CD8-positive, alpha-beta memory T cell (primary cell): ENCODE measurements at regions of chr4 and their contacts with region 1.

Region 1: DNA sequence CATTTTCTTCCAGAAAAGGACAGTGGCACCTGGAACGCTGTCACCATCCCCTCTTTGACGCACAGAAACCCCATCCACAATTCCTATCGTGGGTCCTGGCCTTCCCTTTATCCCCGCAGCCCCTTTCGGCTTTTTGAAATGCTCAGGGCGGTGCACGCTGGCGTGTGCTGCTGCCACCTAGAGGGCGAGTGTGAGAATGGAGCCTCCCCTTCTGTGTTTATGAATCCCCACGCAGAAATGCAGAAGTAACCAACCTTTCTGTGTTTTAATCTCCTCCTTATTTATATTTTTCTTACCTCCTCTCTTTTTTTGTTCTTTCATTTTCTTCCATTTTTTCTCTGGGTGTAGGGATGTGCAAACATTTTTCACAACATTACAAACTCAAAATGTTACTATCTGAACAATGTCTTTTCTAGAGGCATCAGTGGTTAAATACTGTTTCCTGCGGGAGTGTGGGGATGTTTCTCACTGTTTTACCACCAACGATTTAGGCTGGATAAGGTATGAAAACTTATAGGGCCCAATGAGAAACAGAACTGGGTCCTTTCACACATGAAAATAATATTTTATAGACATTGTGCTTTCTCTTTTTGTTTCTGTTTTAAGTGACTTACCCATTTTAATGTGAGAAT is 50.0 kb downstream of the TMA16 start:
- DNase-seq: peak; percentile 31 to 64 (median 45)
- H3K4me3 ChIP-seq: peak overlapping the region; percentile 17
- H3K4me3 Mint-ChIP-seq: no peak overlapping the region
- H3K27ac ChIP-seq: no peak overlapping the region
- H3K27ac Mint-ChIP-seq: peak overlapping the region in 1 of 8 donors; percentile 30
- H3K4me1 ChIP-seq: no peaks in the 10 kb centered on the region
- H3K4me1 Mint-ChIP-seq: peaks cover 6 to 10% (median 7%) of the 10 kb centered on the region in 3 donors
- H3K27me3 ChIP-seq: no peaks in the 10 kb centered on the region
- H3K27me3 Mint-ChIP-seq: no peaks in the 10 kb centered on the region

Region 2: DNA sequence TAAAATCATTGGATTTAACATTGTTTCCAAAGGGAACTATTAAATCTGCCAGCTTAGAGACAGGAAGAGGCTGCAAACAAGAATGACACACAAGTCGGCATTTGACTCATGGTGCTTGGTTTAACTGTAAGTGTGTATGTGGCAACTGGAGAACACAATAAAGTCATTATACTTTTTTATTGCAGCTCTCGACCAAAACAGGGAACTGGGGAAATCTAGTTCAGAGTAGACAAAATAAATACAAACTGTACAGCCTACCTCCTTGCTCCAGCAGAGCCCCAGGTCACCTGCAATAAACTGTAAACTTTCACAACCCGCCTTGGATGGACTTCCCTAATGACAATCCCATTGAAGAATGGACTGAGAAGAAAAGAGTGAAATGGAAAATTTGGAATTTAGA is 176.9 kb before region 1 on chr4:
- CTCF ChIA-PET with region 1: no interaction called
- POLR2A ChIA-PET with region 1: no interaction called
- DNase-seq: no peak
- H3K4me3 ChIP-seq: no peak overlapping the region
- H3K4me3 Mint-ChIP-seq: no peak overlapping the region
- H3K27ac ChIP-seq: no peak overlapping the region
- H3K27ac Mint-ChIP-seq: no peak overlapping the region
- H3K4me1 ChIP-seq: no peaks in the 10 kb centered on the region
- H3K4me1 Mint-ChIP-seq: no peaks in the 10 kb centered on the region
- H3K27me3 ChIP-seq: peaks cover 3% of the 10 kb centered on the region
- H3K27me3 Mint-ChIP-seq: peaks cover 4 to 13% of the 10 kb centered on the region in 2 donors

Region 3: DNA sequence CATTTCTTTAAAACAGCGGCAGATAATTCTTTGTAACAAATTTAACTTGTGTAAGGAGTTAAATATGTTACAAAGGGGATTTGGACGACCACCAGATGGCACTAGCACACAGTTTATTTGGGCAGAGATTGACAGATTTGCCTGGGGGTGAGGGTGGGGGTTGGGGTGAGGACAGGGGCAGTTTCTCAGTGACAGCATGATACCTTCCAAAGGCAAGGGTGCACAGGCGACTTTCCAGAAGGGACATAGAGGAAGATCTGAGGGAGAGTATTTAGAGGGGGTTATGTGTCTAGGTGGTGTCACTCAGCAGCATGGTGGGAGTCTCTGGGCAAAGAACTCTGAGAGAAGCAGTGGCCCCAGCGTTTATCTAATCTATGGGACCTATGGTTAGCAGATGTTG is 59.6 kb before region 1 on chr4:
- CTCF ChIA-PET with region 1: interaction called, 65 read pairs
- POLR2A ChIA-PET with region 1: no interaction called
- DNase-seq: peak; percentile 26 to 63 (median 38)
- H3K4me3 ChIP-seq: no peak overlapping the region
- H3K4me3 Mint-ChIP-seq: no peak overlapping the region
- H3K27ac ChIP-seq: no peak overlapping the region
- H3K27ac Mint-ChIP-seq: no peak overlapping the region
- H3K4me1 ChIP-seq: no peaks in the 10 kb centered on the region
- H3K4me1 Mint-ChIP-seq: no peaks in the 10 kb centered on the region
- H3K27me3 ChIP-seq: no peaks in the 10 kb centered on the region
- H3K27me3 Mint-ChIP-seq: peaks cover 9 to 26% of the 10 kb centered on the region in 2 donors

Region 4: GRCh38 chr4:163494360-163495162 is 50.0 kb before region 1 on chr4 and contains the start of gene TMA16:
- CTCF ChIA-PET with region 1: interaction called, 14 read pairs
- POLR2A ChIA-PET with region 1: interaction called, 10 read pairs
- DNase-seq: peak; percentile 60 to 81 (median 78)
- H3K4me3 ChIP-seq: peak within 1 kb of the TSS; percentile 94
- H3K4me3 Mint-ChIP-seq: peak within 1 kb of the TSS; percentile 94 to 100 (median 98)
- H3K27ac ChIP-seq: peak within 1 kb of the TSS; percentile 82
- H3K27ac Mint-ChIP-seq: peak within 1 kb of the TSS; percentile 89 to 98 (median 98)
- H3K4me1 ChIP-seq: peaks cover 18% of the 10 kb centered on the region
- H3K4me1 Mint-ChIP-seq: peaks cover 34 to 43% (median 37%) of the 10 kb centered on the region in 3 donors
- H3K27me3 ChIP-seq: no peaks in the 10 kb centered on the region
- H3K27me3 Mint-ChIP-seq: no peaks in the 10 kb centered on the region
- total RNA-seq, gene TMA16: 52.9 to 55.9 TPM

Region 5: DNA sequence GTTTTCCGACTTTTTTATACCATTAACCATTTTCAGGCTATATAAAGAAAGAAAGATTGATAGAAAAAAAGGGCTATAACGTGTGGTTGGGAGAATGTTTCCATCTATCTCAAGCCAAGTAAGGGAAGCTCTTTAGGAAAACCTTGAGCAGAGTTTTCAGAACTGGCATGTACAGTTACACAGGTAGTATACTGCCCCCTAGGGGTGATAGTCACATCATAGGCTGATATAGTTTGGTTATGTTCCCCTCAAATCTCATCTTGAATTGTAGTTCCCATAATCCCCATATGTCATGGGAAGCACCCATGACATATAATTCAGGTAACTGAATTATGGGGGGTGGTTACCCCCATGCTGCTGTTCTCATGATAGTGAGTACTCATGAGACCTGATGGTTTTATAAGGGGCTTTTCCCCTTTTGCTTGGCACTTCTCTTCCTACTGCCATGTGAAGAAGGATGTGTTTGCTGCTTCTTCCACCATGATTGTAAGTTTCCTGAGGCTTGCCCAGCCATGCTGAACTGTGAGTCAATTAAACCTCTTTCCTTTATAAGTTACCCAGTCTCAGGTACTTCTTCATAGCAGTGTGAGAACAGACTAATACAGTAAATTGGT is 136.8 kb after region 1 on chr4:
- CTCF ChIA-PET with region 1: interaction called, 59 read pairs
- POLR2A ChIA-PET with region 1: no interaction called
- DNase-seq: peak in 3 of 5 donors; percentile 2 to 62 (median 42)
- H3K4me3 ChIP-seq: no peak overlapping the region
- H3K4me3 Mint-ChIP-seq: no peak overlapping the region
- H3K27ac ChIP-seq: no peak overlapping the region
- H3K27ac Mint-ChIP-seq: peak overlapping the region in 1 of 8 donors; percentile 76
- H3K4me1 ChIP-seq: no peaks in the 10 kb centered on the region
- H3K4me1 Mint-ChIP-seq: no peaks in the 10 kb centered on the region
- H3K27me3 ChIP-seq: no peaks in the 10 kb centered on the region
- H3K27me3 Mint-ChIP-seq: peaks cover 0 to 9% of the 10 kb centered on the region in 2 donors

Region 6: DNA sequence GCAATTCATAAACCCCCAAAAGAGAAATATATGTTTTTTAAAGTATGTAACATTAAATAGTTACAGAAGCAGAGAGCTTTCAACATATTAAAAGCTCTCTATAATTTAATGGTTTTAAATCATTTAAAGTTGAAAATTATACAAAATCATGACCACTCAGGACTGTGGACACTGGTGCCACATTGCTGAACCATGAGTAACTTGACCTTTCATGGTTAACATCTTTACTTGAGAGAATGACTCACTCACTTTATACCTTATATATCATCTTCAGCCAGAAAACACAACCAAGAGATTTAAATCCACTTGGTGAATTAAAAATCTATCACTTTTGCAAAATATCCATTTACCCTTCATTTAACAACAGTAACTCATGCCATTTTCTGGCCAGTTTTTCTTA is 625.1 kb after region 1 on chr4:
- CTCF ChIA-PET with region 1: no interaction called
- POLR2A ChIA-PET with region 1: no interaction called
- DNase-seq: no peak
- H3K4me3 ChIP-seq: no peak overlapping the region
- H3K4me3 Mint-ChIP-seq: no peak overlapping the region
- H3K27ac ChIP-seq: no peak overlapping the region
- H3K27ac Mint-ChIP-seq: no peak overlapping the region
- H3K4me1 ChIP-seq: no peaks in the 10 kb centered on the region
- H3K4me1 Mint-ChIP-seq: no peaks in the 10 kb centered on the region
- H3K27me3 ChIP-seq: no peaks in the 10 kb centered on the region
- H3K27me3 Mint-ChIP-seq: peaks cover 0 to 3% of the 10 kb centered on the region in 2 donors